ENCODE measurements at regions of chr16 and their contacts with region 1.

Region 1: GRCh38 chr16:21599233-21600030 is at the start of gene METTL9:
- DNase-seq: peak; percentile 93
- ATAC-seq: peak; percentile 96
- H3K4me3 ChIP-seq: peak within 1 kb of the TSS; percentile 61
- H3K27ac ChIP-seq: peak within 1 kb of the TSS; percentile 85
- H3K4me1 ChIP-seq: no peaks in the 10 kb centered on the region; the same call in 1 of the 2 replicates
- H3K27me3 ChIP-seq: no peaks in the 10 kb centered on the region
- CTCF ChIP-seq: no peak
- POLR2A ChIP-seq: peak; percentile 74
- RAD21 ChIP-seq: no peak
- total RNA-seq, gene METTL9: 95.5 and 95.8 TPM in 2 replicates

Region 2: GRCh38 chr16:21167360-21167759 is 432.1 kb before region 1 on chr16:
- CTCF ChIA-PET with region 1: no interaction called
- POLR2A ChIA-PET with region 1: no interaction called
- dilution Hi-C with region 1: no loop called
- in situ Hi-C with region 1: no loop called
- intact Hi-C with region 1: no loop called
- DNase-seq: peak; percentile 98
- ATAC-seq: peak; percentile 88
- H3K4me3 ChIP-seq: no peak overlapping the region
- H3K27ac ChIP-seq: peak overlapping the region; percentile 50
- H3K4me1 ChIP-seq: peaks cover 14% of the 10 kb centered on the region
- H3K27me3 ChIP-seq: no peaks in the 10 kb centered on the region
- CTCF ChIP-seq: no peak
- POLR2A ChIP-seq: no peak
- RAD21 ChIP-seq: no peak

Region 3: GRCh38 chr16:21208446-21209230 is 390.8 kb before region 1 on chr16:
- CTCF ChIA-PET with region 1: no interaction called
- POLR2A ChIA-PET with region 1: no interaction called
- dilution Hi-C with region 1: no loop called
- in situ Hi-C with region 1: no loop called
- intact Hi-C with region 1: no loop called
- DNase-seq: no peak
- ATAC-seq: no peak
- H3K4me3 ChIP-seq: no peak overlapping the region
- H3K27ac ChIP-seq: no peak overlapping the region
- H3K4me1 ChIP-seq: no peaks in the 10 kb centered on the region
- H3K27me3 ChIP-seq: peaks cover 24% of the 10 kb centered on the region
- CTCF ChIP-seq: no peak
- POLR2A ChIP-seq: no peak
- RAD21 ChIP-seq: no peak

Region 4: DNA sequence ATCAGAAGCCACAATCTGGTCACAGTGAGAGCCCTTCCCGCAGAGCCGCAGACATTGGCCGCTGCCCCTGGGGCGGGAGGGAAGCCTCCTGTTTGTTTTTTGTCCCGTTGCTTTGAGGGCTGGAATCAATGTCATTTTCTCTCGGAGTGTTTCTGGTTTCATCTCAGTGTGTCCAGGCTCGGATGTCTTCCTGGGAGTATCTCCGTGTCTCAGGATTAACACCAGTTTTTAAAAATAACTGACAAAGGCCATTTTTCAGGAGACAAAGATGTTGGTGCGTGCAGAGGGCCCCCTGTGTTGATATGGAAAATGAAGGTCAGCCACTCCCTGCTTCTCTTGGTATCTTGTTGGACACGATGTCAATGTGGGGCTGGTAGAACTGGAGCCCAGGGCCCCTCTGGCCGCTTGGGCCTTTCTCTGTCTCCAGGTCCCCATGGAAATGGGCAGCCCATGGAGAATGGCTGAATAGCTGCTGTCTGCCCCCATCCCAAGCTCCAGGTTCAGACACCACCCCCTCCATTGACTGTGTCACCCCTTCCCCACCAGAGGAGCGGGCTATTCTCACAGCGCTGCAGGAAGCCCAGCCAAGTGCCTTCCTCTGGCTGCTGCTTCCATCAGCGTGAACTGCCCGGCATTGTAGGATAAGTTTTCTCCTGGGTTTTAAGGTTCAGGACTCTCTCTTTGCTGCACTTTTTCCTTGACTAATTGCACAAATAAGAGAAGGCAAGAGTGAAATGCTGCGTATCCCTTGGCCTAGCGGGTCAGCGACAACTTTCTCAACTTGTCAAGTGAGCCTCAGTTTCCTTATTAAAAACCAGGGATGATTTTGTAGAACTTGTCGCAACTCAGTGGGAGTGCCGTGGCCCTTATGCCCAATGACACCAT is 72.3 kb before region 1 on chr16:
- CTCF ChIA-PET with region 1: no interaction called
- POLR2A ChIA-PET with region 1: no interaction called
- dilution Hi-C with region 1: no loop called
- in situ Hi-C with region 1: no loop called
- intact Hi-C with region 1: loop called (anchors 5 kb)
- DNase-seq: no peak
- ATAC-seq: no peak
- H3K4me3 ChIP-seq: no peak overlapping the region
- H3K27ac ChIP-seq: no peak overlapping the region
- H3K4me1 ChIP-seq: peaks cover 4% of the 10 kb centered on the region; the same call in 1 of the 2 replicates
- H3K27me3 ChIP-seq: peaks cover 9% of the 10 kb centered on the region
- CTCF ChIP-seq: no peak
- POLR2A ChIP-seq: no peak
- RAD21 ChIP-seq: no peak

Region 5: DNA sequence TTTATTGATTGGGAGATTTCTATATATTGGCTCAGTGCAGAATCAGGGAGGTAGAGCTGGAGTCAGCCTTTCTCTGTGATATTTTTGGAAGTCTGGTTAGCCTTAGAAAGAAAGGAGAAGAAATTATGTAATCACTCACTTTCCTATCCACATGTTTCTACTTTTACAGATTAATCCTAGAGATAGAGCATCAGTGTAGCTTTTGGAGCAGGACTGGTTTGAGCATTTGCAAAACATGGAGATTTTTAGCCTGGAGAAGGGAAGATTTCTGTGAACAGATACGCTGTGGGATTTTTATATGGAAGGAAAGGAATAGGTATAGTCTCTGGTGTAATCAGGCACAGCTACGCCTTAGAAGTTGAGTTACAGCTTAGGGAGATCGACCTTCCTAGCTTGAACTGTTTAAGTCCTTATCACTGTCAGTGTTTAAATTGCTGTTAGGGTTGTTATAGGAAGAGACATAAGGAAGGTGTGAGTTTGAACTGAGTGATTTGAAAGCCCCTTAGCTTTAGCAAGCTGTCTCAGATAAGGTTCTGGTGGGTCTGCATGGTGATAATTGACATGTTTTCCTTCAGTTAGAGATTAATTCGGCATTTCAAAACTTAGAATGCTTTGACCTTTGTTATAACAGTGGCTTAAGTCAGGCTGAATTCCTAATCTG is 20.5 kb after region 1 on chr16:
- CTCF ChIA-PET with region 1: interaction called, 3 read pairs
- POLR2A ChIA-PET with region 1: interaction called, 9 read pairs
- dilution Hi-C with region 1: no loop called
- in situ Hi-C with region 1: no loop called
- intact Hi-C with region 1: loop called (anchors 2 kb)
- DNase-seq: no peak
- ATAC-seq: no peak
- H3K4me3 ChIP-seq: no peak overlapping the region
- H3K27ac ChIP-seq: no peak overlapping the region
- H3K4me1 ChIP-seq: no peaks in the 10 kb centered on the region
- H3K27me3 ChIP-seq: no peaks in the 10 kb centered on the region
- CTCF ChIP-seq: no peak
- POLR2A ChIP-seq: no peak
- RAD21 ChIP-seq: no peak

Region 6: GRCh38 chr16:21656795-21657768 is 57.6 kb after region 1 on chr16:
- CTCF ChIA-PET with region 1: no interaction called
- POLR2A ChIA-PET with region 1: no interaction called
- dilution Hi-C with region 1: no loop called
- in situ Hi-C with region 1: loop called (anchors 10 kb)
- intact Hi-C with region 1: no loop called
- DNase-seq: peak; percentile 67
- ATAC-seq: peak; percentile 68
- H3K4me3 ChIP-seq: no peak overlapping the region
- H3K27ac ChIP-seq: no peak overlapping the region
- H3K4me1 ChIP-seq: no peaks in the 10 kb centered on the region; the same call in 1 of the 2 replicates
- H3K27me3 ChIP-seq: no peaks in the 10 kb centered on the region
- CTCF ChIP-seq: peak; percentile 82
- POLR2A ChIP-seq: no peak
- RAD21 ChIP-seq: peak; percentile 71

Measured in IMR-90 (cell line).